PC-3 (cell line): ENCODE measurements at regions of chr6 and their contacts with region 1.

Region 1: DNA sequence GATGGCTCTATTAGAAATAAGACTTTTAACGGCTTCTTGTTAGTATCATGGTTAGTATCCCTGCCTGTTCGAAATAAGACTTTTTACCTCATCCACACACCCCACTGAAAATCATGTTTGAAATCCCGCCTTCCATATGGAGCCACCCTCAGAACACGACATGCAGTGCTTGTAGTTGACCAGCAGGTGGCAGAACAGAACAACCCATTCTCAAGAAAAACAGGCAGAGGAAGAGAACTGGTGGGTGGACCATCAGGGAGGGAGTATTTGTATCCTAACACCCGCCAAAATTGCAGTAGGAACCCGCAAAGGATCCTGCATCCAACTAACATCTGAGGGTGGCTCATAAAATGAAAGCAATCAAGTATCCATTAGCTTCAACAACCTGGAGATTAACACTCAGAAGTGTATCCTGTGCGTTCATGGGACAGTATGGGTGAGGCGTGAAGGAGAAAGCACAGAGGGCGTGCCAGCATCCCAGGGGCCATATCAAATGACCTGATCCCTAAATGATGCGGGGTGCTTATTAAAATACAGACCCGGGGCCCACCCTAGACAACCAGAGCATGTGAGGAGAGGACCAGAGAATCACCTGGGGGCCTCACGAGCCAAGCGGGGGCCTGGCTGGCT is 89.6 kb upstream of the NHSL1 start:
- DNase-seq: peak; percentile 69
- ATAC-seq: peak; percentile 32
- H3K4me3 ChIP-seq: no peak overlapping the region
- H3K27ac ChIP-seq: no peak overlapping the region
- H3K4me1 ChIP-seq: peaks cover 13% of the 10 kb centered on the region
- H3K27me3 ChIP-seq: no peaks in the 10 kb centered on the region
- CTCF ChIP-seq: peak; percentile 87

Region 2: DNA sequence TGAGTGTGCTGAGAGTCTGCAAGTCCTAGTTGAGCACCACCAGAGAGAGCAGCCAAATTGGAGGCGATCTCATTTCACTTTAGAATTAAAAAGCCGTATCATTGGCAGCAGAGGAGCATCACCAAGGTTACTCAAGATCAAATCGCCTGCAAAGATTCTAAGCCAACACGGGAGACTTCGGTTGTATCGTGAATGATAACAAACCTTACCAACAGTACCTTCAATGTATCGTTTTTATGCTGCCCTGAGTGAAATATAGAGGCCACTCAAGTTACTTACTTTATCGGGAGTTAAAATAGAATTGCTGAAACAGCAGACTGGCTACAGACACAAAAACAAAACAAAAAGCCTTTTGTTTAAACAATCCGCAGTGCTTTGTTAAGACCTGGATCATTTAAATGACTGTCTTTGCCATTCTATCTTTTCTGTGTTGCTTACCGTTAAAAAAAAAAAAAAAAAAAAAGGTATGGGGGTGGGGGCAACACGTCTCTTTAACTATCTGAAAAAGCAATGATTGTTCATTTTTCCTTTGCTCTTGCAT is 103.8 kb before region 1 on chr6:
- CTCF ChIA-PET with region 1: no interaction called
- POLR2A ChIA-PET with region 1: no interaction called
- intact Hi-C with region 1: no loop called
- DNase-seq: no peak
- ATAC-seq: no peak
- H3K4me3 ChIP-seq: no peak overlapping the region
- H3K27ac ChIP-seq: no peak overlapping the region
- H3K4me1 ChIP-seq: no peaks in the 10 kb centered on the region
- H3K27me3 ChIP-seq: no peaks in the 10 kb centered on the region
- CTCF ChIP-seq: no peak

Region 3: DNA sequence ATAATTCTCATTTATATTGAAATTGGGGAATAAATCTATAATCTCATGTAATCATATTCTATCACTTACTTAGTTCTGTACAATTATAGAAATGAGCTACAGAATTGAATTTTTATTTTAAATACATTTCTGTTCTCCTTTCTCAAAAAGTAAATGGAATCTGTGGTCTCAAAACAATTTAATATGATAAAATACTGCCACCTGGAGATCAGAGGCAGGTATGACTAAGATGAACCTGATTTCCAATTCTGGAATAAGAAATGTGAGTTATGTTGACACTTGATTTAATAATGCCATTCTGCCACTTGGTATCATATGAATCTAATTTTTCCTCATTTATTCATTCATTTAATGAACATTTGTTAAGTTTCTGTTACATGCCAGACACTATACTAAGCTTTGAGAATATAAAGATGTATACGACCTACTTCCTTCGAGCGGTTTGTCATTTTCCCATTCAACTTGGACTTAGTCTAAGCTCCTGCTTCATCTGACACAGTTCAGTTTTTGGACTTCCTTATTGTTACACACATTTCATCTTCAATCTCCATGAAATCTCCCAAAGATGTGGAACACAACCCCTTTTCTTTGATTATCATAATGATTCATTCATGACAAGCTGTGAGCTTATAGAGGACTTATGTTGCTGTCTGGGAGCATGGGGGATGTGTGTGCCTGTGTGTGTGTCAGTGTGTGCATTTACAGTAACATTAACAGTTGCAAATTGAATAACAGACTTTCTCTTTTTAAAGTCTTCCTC is 177.2 kb after region 1 on chr6:
- CTCF ChIA-PET with region 1: no interaction called
- POLR2A ChIA-PET with region 1: no interaction called
- intact Hi-C with region 1: loop called (anchors 1 kb)
- DNase-seq: peak; percentile 66
- ATAC-seq: no peak
- H3K4me3 ChIP-seq: no peak overlapping the region
- H3K27ac ChIP-seq: no peak overlapping the region
- H3K4me1 ChIP-seq: no peaks in the 10 kb centered on the region
- H3K27me3 ChIP-seq: no peaks in the 10 kb centered on the region
- CTCF ChIP-seq: peak; percentile 76